ENCODE measurements at regions of chr6 and their contacts with region 1.

Region 1: GRCh38 chr6:119349323-119350042 is at the start of gene MAN1A1:
- DNase-seq: no peak
- ATAC-seq: peak; percentile 80
- H3K4me3 ChIP-seq: peak within 1 kb of the TSS; percentile 84
- H3K27ac ChIP-seq: peak within 1 kb of the TSS; percentile 84
- H3K4me1 ChIP-seq: peaks cover 3% of the 10 kb centered on the region
- H3K27me3 ChIP-seq: no peaks in the 10 kb centered on the region
- CTCF ChIP-seq: 0 out of 6 replicates have a peak, but pooled peaks of 1 of the 3 experiments have one; percentile 12
- EP300 ChIP-seq: no peak
- POLR2A ChIP-seq: peak; percentile 100
- RAD21 ChIP-seq: no peak
- polyA plus RNA-seq, gene MAN1A1: 8.7 TPM

Region 2: GRCh38 chr6:118735320-118735719 is 614.2 kb before region 1 on chr6:
- CTCF ChIA-PET with region 1: no interaction called
- POLR2A ChIA-PET with region 1: no interaction called
- RAD21 ChIA-PET with region 1: no interaction called
- SMC1A ChIA-PET with region 1: no interaction called
- in situ Hi-C with region 1: no loop called
- intact Hi-C with region 1: no loop called
- DNase-seq: no peak
- ATAC-seq: peak; percentile 57
- H3K4me3 ChIP-seq: no peak overlapping the region
- H3K27ac ChIP-seq: no peak overlapping the region
- H3K4me1 ChIP-seq: no peaks in the 10 kb centered on the region
- H3K27me3 ChIP-seq: no peaks in the 10 kb centered on the region
- CTCF ChIP-seq: peak; percentile 34 to 52 (median 49); a peak in 5 of 6 replicates
- EP300 ChIP-seq: no peak
- POLR2A ChIP-seq: no peak
- RAD21 ChIP-seq: peak; percentile 64

Region 3: GRCh38 chr6:118843685-118844390 is 505.6 kb before region 1 on chr6:
- CTCF ChIA-PET with region 1: no interaction called
- POLR2A ChIA-PET with region 1: no interaction called
- RAD21 ChIA-PET with region 1: no interaction called
- SMC1A ChIA-PET with region 1: no interaction called
- in situ Hi-C with region 1: no loop called
- intact Hi-C with region 1: no loop called
- DNase-seq: peak; percentile 69
- ATAC-seq: peak; percentile 96
- H3K4me3 ChIP-seq: no peak overlapping the region; the same call in 1 of the 2 replicates
- H3K27ac ChIP-seq: peak overlapping the region; percentile 23
- H3K4me1 ChIP-seq: peaks cover 15% of the 10 kb centered on the region
- H3K27me3 ChIP-seq: no peaks in the 10 kb centered on the region
- CTCF ChIP-seq: no peak
- EP300 ChIP-seq: 0 out of 4 replicates have a peak, but pooled peaks have one; percentile 16 to 53
- POLR2A ChIP-seq: no peak
- RAD21 ChIP-seq: no peak

Region 4: DNA sequence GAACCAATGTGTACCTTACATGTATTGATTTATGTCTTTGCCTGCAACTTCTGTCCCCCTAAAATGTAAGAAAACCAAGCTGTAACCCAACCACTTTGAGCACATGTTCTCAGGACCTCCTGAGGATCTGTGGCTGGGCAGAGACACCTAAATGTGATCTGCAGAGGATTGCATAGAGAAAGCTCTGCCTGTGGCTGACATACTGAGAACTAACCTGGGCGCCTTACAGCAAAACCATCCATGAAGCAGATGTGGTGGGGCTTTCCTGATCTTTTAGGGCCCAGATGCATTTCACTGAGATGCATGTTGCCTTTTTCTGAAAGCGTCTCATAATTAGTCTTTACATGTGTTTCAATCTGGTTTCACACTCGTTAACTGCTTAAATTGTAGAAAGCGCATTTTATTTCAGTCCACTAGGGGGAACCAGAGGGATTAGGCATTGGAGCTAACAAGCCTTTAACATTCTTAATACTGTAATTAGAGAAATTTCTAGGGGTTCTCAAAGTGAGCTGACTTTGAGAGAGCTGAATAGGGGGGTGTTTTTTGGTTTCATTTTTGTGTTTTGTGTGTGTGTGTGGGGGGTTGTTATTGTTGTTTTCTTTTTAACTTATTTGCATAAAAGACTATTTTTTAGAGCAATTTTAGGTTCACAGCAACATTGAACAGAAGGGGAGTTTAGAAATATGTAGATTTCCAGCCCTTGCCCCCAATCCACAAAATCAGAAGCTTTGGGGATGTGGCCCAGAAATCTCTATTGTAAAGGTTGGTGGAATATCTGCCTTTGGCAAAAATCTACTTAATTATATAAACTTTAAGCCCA is 220.1 kb before region 1 on chr6:
- CTCF ChIA-PET with region 1: interaction called, 11 read pairs
- POLR2A ChIA-PET with region 1: interaction called, 3 read pairs
- RAD21 ChIA-PET with region 1: interaction called, 12 read pairs
- SMC1A ChIA-PET with region 1: interaction called, 11 read pairs
- in situ Hi-C with region 1: no loop called
- intact Hi-C with region 1: no loop called
- DNase-seq: no peak
- ATAC-seq: peak; percentile 95
- H3K4me3 ChIP-seq: no peak overlapping the region
- H3K27ac ChIP-seq: no peak overlapping the region
- H3K4me1 ChIP-seq: no peaks in the 10 kb centered on the region
- H3K27me3 ChIP-seq: no peaks in the 10 kb centered on the region; a peak in 1 of 4 replicates
- CTCF ChIP-seq: peak; percentile 72 to 81 (median 79)
- EP300 ChIP-seq: no peak
- POLR2A ChIP-seq: no peak
- RAD21 ChIP-seq: peak; percentile 87

Region 5: DNA sequence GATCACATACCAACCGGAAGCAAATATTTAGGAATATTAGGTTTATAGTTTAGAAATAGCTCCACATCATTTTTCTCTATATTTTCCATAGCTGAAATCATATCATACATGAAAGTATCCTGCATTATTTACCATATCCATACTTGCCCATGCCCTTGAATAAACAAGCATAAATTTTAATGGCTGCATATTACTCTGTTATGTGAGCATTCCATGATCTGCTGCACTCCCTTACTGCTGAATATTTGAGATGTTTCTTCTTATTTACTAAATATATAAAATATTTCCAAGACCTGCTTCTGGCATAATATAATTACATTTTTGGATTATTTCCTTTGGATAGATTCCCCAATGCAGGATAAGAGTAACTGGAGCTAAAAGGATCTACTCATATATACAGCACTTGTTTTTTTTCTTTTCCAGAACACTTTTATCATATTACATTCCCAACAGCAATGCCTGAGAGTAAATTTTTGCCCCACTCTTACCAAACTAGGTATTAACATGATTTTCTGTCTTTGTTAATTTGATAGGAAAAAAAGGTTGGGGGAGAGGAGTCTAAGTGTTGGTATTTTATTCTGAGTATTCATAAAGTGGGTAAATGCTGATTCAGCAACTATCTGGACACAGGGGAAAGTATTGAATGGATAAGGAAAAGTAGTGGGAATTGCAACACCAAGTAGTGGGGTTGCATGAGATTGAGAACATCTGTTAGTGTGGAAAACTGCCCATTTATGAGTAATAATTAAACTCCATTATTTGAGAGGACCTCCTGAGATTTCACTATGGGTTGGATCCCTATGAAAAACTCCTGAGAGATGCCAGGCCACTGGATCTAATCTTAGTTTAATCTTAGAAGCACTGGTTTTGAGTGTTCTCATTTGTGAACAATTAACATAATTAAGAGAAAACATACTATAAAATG is 75.9 kb before region 1 on chr6:
- CTCF ChIA-PET with region 1: no interaction called
- POLR2A ChIA-PET with region 1: no interaction called
- RAD21 ChIA-PET with region 1: no interaction called
- SMC1A ChIA-PET with region 1: no interaction called
- in situ Hi-C with region 1: no loop called
- intact Hi-C with region 1: no loop called
- DNase-seq: no peak
- ATAC-seq: no peak
- H3K4me3 ChIP-seq: no peak overlapping the region
- H3K27ac ChIP-seq: no peak overlapping the region
- H3K4me1 ChIP-seq: no peaks in the 10 kb centered on the region
- H3K27me3 ChIP-seq: no peaks in the 10 kb centered on the region
- CTCF ChIP-seq: no peak
- EP300 ChIP-seq: no peak
- POLR2A ChIP-seq: no peak
- RAD21 ChIP-seq: no peak

Region 6: GRCh38 chr6:119322715-119323350 is 26.6 kb before region 1 on chr6:
- CTCF ChIA-PET with region 1: interaction called, 25 read pairs
- POLR2A ChIA-PET with region 1: interaction called, 17 read pairs
- RAD21 ChIA-PET with region 1: interaction called, 16 read pairs
- SMC1A ChIA-PET with region 1: interaction called, 359 read pairs
- in situ Hi-C with region 1: no loop called
- intact Hi-C with region 1: no loop called
- DNase-seq: no peak
- ATAC-seq: peak; percentile 94
- H3K4me3 ChIP-seq: no peak overlapping the region
- H3K27ac ChIP-seq: no peak overlapping the region
- H3K4me1 ChIP-seq: no peaks in the 10 kb centered on the region
- H3K27me3 ChIP-seq: no peaks in the 10 kb centered on the region
- CTCF ChIP-seq: no peak
- EP300 ChIP-seq: no peak; a peak in 2 of 4 replicates
- POLR2A ChIP-seq: no peak
- RAD21 ChIP-seq: no peak

Region 7: DNA sequence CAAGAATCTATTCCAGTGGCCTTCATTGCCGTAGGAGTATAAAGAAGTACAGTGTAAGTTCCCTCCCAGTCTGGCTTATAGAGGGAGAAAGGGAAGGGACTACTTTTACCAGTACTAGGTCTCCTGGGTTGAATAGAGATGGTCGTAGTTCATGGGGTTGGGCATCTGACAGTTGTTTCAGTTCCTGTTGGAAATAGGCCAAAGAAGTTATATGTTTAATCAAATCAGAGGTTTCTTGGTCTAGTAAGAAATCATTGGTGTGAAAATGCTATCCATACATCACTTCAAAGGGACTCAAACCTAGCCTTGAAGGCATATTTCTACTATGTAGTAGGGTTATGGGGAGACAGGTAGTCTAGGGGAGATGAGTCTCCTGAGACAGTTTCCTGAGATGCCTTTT is 45.7 kb after region 1 on chr6:
- CTCF ChIA-PET with region 1: no interaction called
- POLR2A ChIA-PET with region 1: no interaction called
- RAD21 ChIA-PET with region 1: no interaction called
- SMC1A ChIA-PET with region 1: no interaction called
- in situ Hi-C with region 1: no loop called
- intact Hi-C with region 1: no loop called
- DNase-seq: peak; percentile 12
- ATAC-seq: peak; percentile 75
- H3K4me3 ChIP-seq: no peak overlapping the region
- H3K27ac ChIP-seq: no peak overlapping the region
- H3K4me1 ChIP-seq: no peaks in the 10 kb centered on the region
- H3K27me3 ChIP-seq: no peaks in the 10 kb centered on the region
- CTCF ChIP-seq: no peak
- EP300 ChIP-seq: no peak
- POLR2A ChIP-seq: no peak
- RAD21 ChIP-seq: no peak

Region 8: DNA sequence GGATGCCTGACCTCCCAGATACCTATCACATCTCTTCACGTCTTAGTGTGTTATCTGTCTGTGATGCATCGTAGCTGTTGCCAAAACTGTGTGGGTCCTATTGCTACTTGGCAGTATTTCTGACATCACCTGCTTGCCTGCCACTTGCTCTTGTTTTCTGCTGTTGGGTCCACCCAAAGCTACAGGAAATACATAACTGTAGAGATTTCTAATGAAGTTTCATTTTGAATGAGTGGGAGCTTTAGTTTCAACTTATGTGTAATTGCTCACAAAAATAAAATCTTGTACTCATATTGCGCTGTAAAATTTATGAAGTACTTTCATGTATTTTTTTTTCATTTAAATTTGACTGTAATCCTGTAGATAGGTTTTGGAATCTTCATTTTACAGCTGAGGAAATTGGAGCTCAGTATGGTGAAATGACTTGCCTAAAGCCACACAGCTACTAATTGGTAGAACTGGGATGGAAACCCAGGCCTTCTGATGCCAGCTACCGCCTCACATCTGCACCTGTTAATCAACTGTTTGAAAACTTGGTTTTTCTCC is 113.7 kb after region 1 on chr6:
- CTCF ChIA-PET with region 1: interaction called, 18 read pairs
- POLR2A ChIA-PET with region 1: interaction called, 5 read pairs
- RAD21 ChIA-PET with region 1: interaction called, 26 read pairs
- SMC1A ChIA-PET with region 1: interaction called, 17 read pairs
- in situ Hi-C with region 1: no loop called
- intact Hi-C with region 1: loop called (anchors 1 kb)
- DNase-seq: peak; percentile 75
- ATAC-seq: peak; percentile 89
- H3K4me3 ChIP-seq: 0 out of 2 replicates have a peak overlapping the region, but pooled peaks have one; percentile 11
- H3K27ac ChIP-seq: peak overlapping the region; percentile 77
- H3K4me1 ChIP-seq: peaks cover 44% of the 10 kb centered on the region
- H3K27me3 ChIP-seq: no peaks in the 10 kb centered on the region
- CTCF ChIP-seq: no peak
- EP300 ChIP-seq: peak; percentile 64 to 81
- POLR2A ChIP-seq: no peak
- RAD21 ChIP-seq: no peak; the same call in 1 of the 2 replicates

Region 9: GRCh38 chr6:119661628-119662027 is 312.1 kb after region 1 on chr6:
- CTCF ChIA-PET with region 1: interaction called, 4 read pairs
- POLR2A ChIA-PET with region 1: no interaction called
- RAD21 ChIA-PET with region 1: interaction called, 5 read pairs
- SMC1A ChIA-PET with region 1: no interaction called
- in situ Hi-C with region 1: no loop called
- intact Hi-C with region 1: loop called (anchors 5 kb)
- DNase-seq: no peak
- ATAC-seq: peak; percentile 61
- H3K4me3 ChIP-seq: no peak overlapping the region
- H3K27ac ChIP-seq: no peak overlapping the region
- H3K4me1 ChIP-seq: no peaks in the 10 kb centered on the region
- H3K27me3 ChIP-seq: no peaks in the 10 kb centered on the region
- CTCF ChIP-seq: no peak
- EP300 ChIP-seq: no peak
- POLR2A ChIP-seq: no peak
- RAD21 ChIP-seq: no peak

Region 10: DNA sequence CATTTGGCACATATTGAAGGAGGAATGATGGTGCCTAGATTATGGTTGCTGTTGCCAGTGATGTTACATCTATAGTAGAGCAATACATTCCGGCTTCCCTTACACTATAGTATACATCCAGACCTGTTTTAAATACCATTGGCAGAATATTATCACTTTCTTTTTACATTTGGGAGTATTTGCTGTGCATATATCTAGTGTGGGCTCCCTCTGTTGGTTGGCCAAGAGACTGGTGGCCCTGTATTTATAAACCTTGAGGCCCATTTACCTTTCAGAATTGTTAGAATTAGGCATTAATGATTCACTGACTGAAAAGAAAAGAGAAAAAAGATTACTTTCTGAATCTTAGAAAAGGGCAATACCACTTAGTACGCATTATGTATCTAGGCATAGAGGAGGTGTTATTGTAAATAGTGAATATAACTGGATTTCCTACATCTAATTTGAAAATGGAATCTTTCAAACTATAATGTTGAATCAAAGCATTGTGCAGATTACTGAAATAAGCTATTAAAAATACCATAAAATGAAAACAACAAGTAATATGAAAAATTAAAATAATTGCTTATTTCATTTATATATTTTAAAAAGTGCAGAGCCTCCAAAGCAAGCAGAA is 628.9 kb after region 1 on chr6:
- CTCF ChIA-PET with region 1: interaction called, 31 read pairs
- POLR2A ChIA-PET with region 1: no interaction called
- RAD21 ChIA-PET with region 1: interaction called, 12 read pairs
- SMC1A ChIA-PET with region 1: interaction called, 7 read pairs
- in situ Hi-C with region 1: loop called (anchors 10 kb)
- intact Hi-C with region 1: loop called (anchors 5 kb)
- DNase-seq: no peak
- ATAC-seq: peak; percentile 80
- H3K4me3 ChIP-seq: no peak overlapping the region
- H3K27ac ChIP-seq: no peak overlapping the region
- H3K4me1 ChIP-seq: no peaks in the 10 kb centered on the region
- H3K27me3 ChIP-seq: no peaks in the 10 kb centered on the region
- CTCF ChIP-seq: peak; percentile 43 to 48 (median 48); a peak in 5 of 6 replicates
- EP300 ChIP-seq: no peak
- POLR2A ChIP-seq: no peak
- RAD21 ChIP-seq: peak; percentile 57